Aorta (tissue), 5 donors: ENCODE measurements at regions of chr17 and their contacts with region 1.

Region 1: DNA sequence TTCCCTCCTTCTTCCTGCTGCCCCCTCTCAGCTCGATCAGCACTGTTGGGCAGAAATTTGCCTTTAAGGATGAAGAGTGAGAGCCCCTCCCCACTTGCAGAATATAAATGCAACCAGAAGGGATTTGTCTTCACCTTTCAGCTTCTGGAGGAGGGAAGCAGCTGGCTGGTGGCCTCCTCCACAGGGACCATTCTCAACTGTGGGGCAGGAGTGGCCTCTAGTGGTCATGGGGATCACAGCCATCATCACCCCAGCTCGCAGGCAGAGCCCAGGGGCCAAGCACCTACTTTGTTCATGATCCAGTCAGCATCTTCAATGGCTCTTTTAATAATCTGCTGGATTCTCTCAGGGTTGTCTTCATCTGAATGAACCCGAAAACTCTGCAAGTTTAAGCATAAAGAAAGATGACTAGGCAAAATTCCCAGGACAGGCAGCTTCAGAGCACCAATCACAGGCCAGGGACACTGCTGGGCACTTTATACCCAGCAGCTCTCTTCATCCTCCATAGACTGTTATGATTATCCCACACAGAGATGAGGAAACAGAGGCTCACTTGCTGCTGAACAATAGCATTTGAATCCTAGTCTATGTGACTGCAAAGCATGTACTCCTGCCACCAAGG is 13.1 kb downstream of the LYRM9 start:
- DNase-seq: peak; percentile 72 to 81
- ATAC-seq: peak; percentile 77
- H3K4me3 ChIP-seq: no peak overlapping the region
- H3K27ac ChIP-seq: no peak overlapping the region
- H3K4me1 ChIP-seq: no peaks in the 10 kb centered on the region
- H3K27me3 ChIP-seq: no peaks in the 10 kb centered on the region

Region 2: DNA sequence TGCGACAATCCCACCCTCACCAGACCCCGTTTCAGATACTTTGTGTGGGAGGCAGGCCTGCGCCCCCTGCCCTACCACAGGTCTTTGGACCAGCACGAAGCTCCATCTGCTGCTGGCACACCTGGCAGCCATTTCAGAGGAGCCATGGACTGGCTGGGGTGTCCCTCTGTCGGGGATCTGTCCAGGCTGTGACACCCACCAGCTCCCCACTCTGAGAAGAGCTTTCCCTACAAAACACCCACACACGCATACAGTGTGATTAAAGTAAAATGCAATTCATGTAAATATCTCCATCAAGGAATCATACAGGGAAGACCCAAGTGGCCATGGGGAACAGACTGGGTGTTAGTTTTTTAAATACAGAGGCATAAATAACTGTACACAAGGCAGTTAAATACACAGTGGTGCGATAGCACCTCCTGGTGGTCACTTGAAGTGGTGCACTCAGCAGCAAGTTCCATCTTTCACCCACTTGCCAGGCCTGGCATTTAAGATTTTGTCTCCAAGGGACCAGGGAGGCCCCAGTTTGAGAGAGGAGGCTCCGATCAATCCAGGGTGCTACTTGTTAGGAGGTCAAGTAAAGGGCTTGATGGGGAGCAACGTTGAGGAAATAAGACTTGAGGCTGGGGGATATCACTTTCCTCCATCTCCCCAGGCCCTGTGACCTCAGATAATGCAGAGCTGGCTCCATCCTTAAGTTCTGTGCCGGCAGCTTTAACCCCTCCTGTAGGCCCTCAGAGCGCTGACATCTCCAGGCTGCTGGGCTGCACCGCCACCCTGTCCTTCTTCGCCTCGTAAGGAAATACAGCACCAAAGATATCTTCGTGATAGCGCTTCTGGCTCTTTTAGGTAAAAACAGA is 123.4 kb before region 1 on chr17:
- intact Hi-C with region 1: loop called in 1 of 2 experiments (anchors 5 kb)
- DNase-seq: no peak
- ATAC-seq: no peak
- H3K4me3 ChIP-seq: no peak overlapping the region
- H3K27ac ChIP-seq: no peak overlapping the region
- H3K4me1 ChIP-seq: no peaks in the 10 kb centered on the region
- H3K27me3 ChIP-seq: no peaks in the 10 kb centered on the region

Region 3: GRCh38 chr17:27805520-27806146 is 74.5 kb before region 1 on chr17:
- intact Hi-C with region 1: loop called in 1 of 2 experiments (anchors 5 kb)
- DNase-seq: peak; percentile 87 to 88
- ATAC-seq: peak; percentile 94
- H3K4me3 ChIP-seq: peak overlapping the region in 1 of 2 donors; percentile 2
- H3K27ac ChIP-seq: peak overlapping the region in 1 of 2 donors; percentile 48
- H3K4me1 ChIP-seq: no peaks in the 10 kb centered on the region
- H3K27me3 ChIP-seq: no peaks in the 10 kb centered on the region

Region 4: DNA sequence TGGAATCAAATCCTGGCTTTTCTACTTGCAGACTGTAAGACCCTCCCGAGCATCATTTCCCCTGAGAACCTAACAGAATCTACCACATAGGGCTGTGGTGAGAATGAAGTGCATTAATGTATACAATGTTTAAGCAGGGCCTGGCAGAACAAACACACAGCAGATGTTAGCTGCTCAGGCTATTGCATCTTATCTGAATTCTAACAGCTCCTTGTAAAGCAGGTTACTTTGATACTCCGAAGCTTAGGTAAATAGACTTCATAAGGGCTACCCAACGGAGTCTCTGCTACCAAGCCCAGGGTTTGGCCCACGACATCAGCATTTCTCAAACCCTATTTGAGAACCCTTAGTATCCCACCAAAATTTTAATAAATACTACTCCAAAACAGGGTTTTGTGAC is 55.4 kb before region 1 on chr17:
- intact Hi-C with region 1: loop called in 1 of 2 experiments (anchors 5 kb)
- DNase-seq: no peak
- ATAC-seq: no peak
- H3K4me3 ChIP-seq: no peak overlapping the region
- H3K27ac ChIP-seq: no peak overlapping the region
- H3K4me1 ChIP-seq: no peaks in the 10 kb centered on the region
- H3K27me3 ChIP-seq: no peaks in the 10 kb centered on the region